ENCODE measurements at regions of chr10 and their contacts with region 1.

Region 1: DNA sequence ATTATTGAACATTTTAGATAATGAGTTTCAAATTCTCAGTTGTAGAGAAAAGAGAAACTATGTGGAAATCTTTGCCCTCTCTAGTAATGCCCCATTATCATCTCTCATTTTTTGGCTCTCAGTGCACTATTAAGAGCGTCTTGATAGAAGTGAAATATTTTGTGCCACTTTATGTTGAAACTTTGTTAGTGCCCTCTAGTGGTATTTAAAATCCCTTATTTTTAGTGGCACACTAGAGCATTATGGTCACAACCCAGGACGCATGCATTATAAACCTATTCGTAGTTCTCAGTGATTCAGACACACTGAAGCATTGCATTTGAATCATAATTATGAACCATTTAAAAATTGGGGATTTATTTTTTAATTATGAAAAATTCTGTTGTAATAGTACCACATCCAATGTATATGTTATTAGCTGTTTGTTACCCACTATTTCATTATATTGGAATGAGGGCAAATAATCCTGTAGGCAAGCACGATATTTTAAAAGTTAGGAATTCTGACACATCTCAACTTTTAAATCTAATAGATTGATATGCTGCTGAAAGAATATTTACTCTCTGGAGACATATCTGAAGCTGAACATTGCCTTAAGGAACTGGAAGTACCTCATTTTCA is 21.9 kb downstream of the PDCD4 start:
- DNase-seq: peak; percentile 48 to 53
- ATAC-seq: peak; percentile 89 to 92
- H3K4me3 ChIP-seq: no peak overlapping the region
- H3K27ac ChIP-seq: no peak overlapping the region
- H3K4me1 ChIP-seq: peaks cover 7% of the 10 kb centered on the region; the same call in 1 of the 3 replicates
- CTCF ChIP-seq: peak; percentile 82
- EP300 ChIP-seq: no peak
- POLR2A ChIP-seq: no peak
- RAD21 ChIP-seq: peak; percentile 65 to 73

Region 2: GRCh38 chr10:110803830-110804338 is 89.8 kb before region 1 on chr10:
- CTCF ChIA-PET with region 1: interaction called, 25 read pairs
- POLR2A ChIA-PET with region 1: no interaction called
- DNase-seq: peak; percentile 49 to 50
- ATAC-seq: peak; percentile 84 to 95
- H3K4me3 ChIP-seq: no peak overlapping the region
- H3K27ac ChIP-seq: peak overlapping the region in 1 of 2 experiments; percentile 47; a peak in 1 of 6 replicates
- H3K4me1 ChIP-seq: peaks cover 9% of the 10 kb centered on the region; the same call in 1 of the 3 replicates
- CTCF ChIP-seq: peak; percentile 57
- EP300 ChIP-seq: no peak
- POLR2A ChIP-seq: no peak
- RAD21 ChIP-seq: peak; percentile 67 to 75

Region 3: GRCh38 chr10:110834629-110835301 is 58.9 kb before region 1 on chr10:
- CTCF ChIA-PET with region 1: no interaction called
- POLR2A ChIA-PET with region 1: no interaction called
- DNase-seq: no peak
- ATAC-seq: no peak
- H3K4me3 ChIP-seq: no peak overlapping the region
- H3K27ac ChIP-seq: no peak overlapping the region
- H3K4me1 ChIP-seq: no peaks in the 10 kb centered on the region; the same call in 2 of the 3 replicates
- CTCF ChIP-seq: no peak
- EP300 ChIP-seq: no peak
- POLR2A ChIP-seq: no peak
- RAD21 ChIP-seq: no peak

Region 4: DNA sequence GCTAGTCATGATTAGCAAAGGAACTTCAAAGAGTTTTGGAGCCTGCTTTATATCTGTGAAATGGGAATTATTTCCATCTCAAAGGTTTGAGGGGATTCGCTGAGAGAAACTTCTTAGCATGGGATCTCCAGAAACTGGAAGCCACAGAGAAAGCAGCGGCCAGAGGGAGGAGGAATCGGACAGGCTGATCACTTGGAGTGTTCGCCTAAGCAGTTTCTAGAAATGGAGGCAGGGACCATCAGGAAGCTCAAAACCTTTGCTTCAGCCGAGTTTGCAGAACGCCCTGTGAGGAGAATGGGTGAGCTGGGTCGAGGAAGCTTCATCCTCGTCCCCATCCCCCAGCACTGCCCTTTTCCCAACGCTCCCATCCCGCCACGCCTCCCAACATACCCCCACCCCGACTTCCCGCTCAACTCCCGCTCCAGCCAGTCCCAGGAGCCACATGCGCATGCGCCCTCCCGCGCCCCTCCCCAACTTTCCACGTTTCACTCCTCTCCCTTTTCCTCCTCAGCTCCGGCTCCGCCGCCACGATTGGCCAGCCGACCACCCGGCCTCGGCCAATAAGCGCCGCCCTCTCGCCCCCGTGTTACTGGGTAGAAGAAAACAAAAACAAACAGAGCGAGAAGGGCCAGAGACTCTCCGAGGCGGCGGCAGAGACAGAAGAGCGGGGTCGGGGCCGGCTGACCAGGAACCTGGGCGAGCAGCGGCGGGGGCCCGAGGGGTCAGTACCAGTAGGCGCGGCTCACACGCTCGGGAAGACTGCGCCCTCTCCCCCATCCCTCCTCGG is 22.2 kb before region 1 on chr10 and contains the start of gene PDCD4:
- CTCF ChIA-PET with region 1: interaction called, 11 read pairs
- POLR2A ChIA-PET with region 1: interaction called, 5 read pairs
- DNase-seq: peak; percentile 80 to 98
- ATAC-seq: peak; percentile 87 to 95
- H3K4me3 ChIP-seq: peak within 1 kb of the TSS; percentile 78
- H3K27ac ChIP-seq: peak within 1 kb of the TSS; percentile 89 to 95
- H3K4me1 ChIP-seq: peaks cover 36% of the 10 kb centered on the region
- CTCF ChIP-seq: no peak
- EP300 ChIP-seq: no peak
- POLR2A ChIP-seq: peak; percentile 65
- RAD21 ChIP-seq: no peak
- polyA plus RNA-seq, gene PDCD4: 41.9 and 71.4 TPM in 2 replicates

Region 5: GRCh38 chr10:110910138-110910537 is 16.5 kb after region 1 on chr10:
- CTCF ChIA-PET with region 1: interaction called, 15 read pairs
- POLR2A ChIA-PET with region 1: no interaction called
- DNase-seq: no peak
- ATAC-seq: no peak
- H3K4me3 ChIP-seq: no peak overlapping the region
- H3K27ac ChIP-seq: no peak overlapping the region
- H3K4me1 ChIP-seq: no peaks in the 10 kb centered on the region
- CTCF ChIP-seq: no peak
- EP300 ChIP-seq: no peak
- POLR2A ChIP-seq: no peak
- RAD21 ChIP-seq: no peak